ENCODE measurements at regions of chr15 and their contacts with region 1.

Region 1: GRCh38 chr15:90660195-90660998 is 56.7 kb upstream of the BLM start:
- DNase-seq: peak; percentile 68
- ATAC-seq: peak; percentile 79
- H3K4me3 Mint-ChIP-seq: peak overlapping the region; percentile 79
- H3K27ac Mint-ChIP-seq: peak overlapping the region; percentile 87
- H3K4me1 Mint-ChIP-seq: peaks cover 65% of the 10 kb centered on the region
- H3K27me3 Mint-ChIP-seq: peaks cover 3% of the 10 kb centered on the region

Region 2: DNA sequence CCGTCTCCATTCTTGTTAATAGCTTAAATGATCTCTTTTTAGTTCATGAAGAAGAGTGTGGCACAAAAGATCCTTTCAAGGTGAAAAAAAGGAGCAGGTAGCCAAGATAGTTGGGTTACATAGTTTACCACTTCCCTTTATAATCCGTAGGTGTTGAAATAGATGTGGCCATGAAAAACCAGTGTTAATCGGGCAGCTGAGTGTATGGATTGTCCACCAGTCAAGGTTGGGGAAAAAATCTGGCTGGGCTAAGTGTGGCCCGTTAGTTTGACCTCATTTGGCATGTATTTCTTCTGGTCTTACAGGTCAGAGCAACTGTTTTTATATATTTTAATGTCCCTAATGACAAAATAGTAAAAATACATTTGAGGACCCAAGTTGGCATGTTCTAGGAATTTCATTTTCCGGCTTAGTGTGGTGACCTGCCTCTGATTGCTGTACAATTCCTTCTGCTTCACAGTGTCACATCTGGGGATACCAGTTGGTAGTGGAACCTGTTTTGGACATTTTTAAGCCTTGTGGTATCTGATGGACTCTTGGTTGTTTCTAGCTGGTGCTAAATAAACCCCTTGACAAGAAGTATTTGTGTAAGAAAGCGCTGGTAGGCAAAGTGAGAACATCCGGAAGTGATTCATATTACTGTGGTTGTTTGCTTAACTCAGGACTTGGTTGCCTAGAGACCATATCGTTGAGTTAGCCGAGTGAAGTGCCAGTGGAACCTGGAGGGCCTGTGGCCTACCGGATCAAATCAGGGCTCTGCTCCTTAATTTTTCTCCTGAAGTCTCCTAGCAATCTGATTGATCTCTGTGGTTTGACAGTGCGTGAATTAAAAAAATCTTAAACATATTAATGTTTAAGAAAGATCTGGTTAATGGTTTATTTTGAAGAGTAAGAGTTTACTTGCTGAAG is 259.7 kb before region 1 on chr15:
- POLR2A ChIA-PET with region 1: no interaction called
- DNase-seq: no peak
- ATAC-seq: peak; percentile 97
- H3K4me3 Mint-ChIP-seq: peak overlapping the region; percentile 69
- H3K27ac Mint-ChIP-seq: peak overlapping the region; percentile 88
- H3K4me1 Mint-ChIP-seq: peaks cover 58% of the 10 kb centered on the region
- H3K27me3 Mint-ChIP-seq: no peaks in the 10 kb centered on the region

Region 3: GRCh38 chr15:90624278-90624981 is 36.0 kb before region 1 on chr15:
- POLR2A ChIA-PET with region 1: no interaction called
- DNase-seq: peak; percentile 19
- ATAC-seq: no peak
- H3K4me3 Mint-ChIP-seq: no peak overlapping the region
- H3K27ac Mint-ChIP-seq: peak overlapping the region; percentile 30
- H3K4me1 Mint-ChIP-seq: peaks cover 13% of the 10 kb centered on the region
- H3K27me3 Mint-ChIP-seq: no peaks in the 10 kb centered on the region

Region 4: DNA sequence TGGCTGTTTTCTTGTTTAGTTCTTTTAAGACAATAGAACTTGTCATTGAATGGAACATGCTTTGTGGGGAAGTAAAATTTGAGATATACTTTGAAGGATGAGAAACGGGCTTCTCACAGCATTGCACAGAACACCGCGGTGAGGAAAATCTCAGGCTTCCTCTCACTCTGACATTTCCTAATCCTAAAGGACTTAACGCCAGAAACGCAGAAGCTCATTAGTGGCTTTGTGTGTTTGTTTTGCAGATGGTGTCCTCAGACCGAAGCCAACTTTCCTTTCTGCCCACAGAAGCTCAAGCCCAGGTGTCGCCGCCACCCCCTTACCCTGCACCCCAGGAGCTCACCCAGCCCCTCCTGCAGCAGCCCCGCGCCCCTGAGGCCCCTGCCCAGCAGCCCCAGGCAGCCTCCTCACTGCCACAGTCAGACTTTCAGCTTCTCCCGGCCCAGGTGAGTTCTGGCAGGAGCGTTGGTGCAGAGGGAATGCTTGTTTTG is 22.2 kb before region 1 on chr15:
- POLR2A ChIA-PET with region 1: no interaction called
- DNase-seq: peak; percentile 21
- ATAC-seq: no peak
- H3K4me3 Mint-ChIP-seq: no peak overlapping the region
- H3K27ac Mint-ChIP-seq: peak overlapping the region; percentile 12
- H3K4me1 Mint-ChIP-seq: peaks cover 4% of the 10 kb centered on the region
- H3K27me3 Mint-ChIP-seq: no peaks in the 10 kb centered on the region

Region 5: GRCh38 chr15:90686435-90687218 is 26.2 kb after region 1 on chr15:
- POLR2A ChIA-PET with region 1: interaction called, 25 read pairs
- DNase-seq: no peak
- ATAC-seq: peak; percentile 95
- H3K4me3 Mint-ChIP-seq: peak overlapping the region; percentile 69
- H3K27ac Mint-ChIP-seq: peak overlapping the region; percentile 96
- H3K4me1 Mint-ChIP-seq: peaks cover 40% of the 10 kb centered on the region
- H3K27me3 Mint-ChIP-seq: no peaks in the 10 kb centered on the region